Natural killer cell (primary cell): ENCODE measurements at regions of chr22 and their contacts with region 1.

Region 1: DNA sequence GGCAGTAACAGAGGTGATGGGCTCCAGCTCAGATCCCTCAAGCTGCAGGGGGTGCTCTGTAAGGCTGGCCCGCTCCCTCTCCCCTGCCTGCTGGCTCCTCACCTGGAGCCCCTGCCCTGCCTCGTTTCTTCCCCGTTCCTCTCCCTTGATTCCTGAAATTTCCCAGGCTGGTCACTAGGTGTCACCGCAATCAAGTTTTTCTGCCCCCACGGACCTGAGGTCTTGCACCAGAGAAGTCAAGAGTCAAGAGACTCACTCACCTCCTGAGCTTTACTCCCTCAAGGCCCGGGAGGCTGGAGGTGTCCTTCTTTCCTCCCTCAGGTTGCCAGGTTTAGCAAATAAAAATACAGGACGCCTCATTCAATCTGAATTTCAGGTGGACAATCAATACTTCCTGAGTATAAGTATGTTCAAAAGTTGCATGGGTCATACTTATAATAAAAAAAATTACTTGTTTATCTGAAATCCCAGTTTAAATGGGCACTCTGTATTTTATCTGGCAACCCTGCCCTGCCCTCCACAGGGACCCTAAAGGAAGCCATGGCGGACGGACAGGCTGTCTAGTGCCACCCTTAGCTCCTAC is 69.2 kb downstream of the SCUBE1 start:
- DNase-seq: peak in 1 of 2 donors; percentile 74
- ATAC-seq: peak; percentile 54 to 85 (median 73)
- H3K4me3 ChIP-seq: no peak overlapping the region
- H3K4me3 Mint-ChIP-seq: no peak overlapping the region
- H3K27ac ChIP-seq: no peak overlapping the region
- H3K27ac Mint-ChIP-seq: no peak overlapping the region
- H3K4me1 ChIP-seq: peaks cover 9% of the 10 kb centered on the region
- H3K4me1 Mint-ChIP-seq: peaks cover 6 to 19% of the 10 kb centered on the region in 2 donors
- H3K27me3 ChIP-seq: no peaks in the 10 kb centered on the region
- H3K27me3 Mint-ChIP-seq: peaks cover 0 to 15% of the 10 kb centered on the region in 2 donors
- CTCF ChIP-seq: peak; percentile 52

Region 2: DNA sequence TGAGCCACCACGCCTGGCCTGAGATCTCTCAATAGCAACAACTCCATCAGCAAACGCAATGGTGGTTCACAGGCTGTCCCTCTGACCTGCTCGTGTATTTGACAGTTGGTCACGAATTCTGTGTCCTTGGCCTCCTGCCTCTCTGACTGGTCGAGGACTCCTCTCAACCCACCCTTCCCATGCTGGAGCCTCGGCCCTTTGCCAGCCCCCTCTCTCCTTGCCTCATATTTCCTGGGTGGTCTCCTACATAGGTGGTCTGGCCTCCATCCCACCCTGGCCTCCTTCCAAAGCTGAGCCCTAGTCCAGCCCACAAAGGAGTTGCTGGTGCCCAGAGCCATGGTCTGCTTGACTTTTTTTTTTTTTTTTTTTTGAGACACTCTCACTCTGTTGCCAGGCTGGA is 541.9 kb before region 1 on chr22:
- intact Hi-C with region 1: no loop called
- DNase-seq: no peak
- ATAC-seq: no peak
- H3K4me3 ChIP-seq: no peak overlapping the region
- H3K4me3 Mint-ChIP-seq: no peak overlapping the region
- H3K27ac ChIP-seq: no peak overlapping the region
- H3K27ac Mint-ChIP-seq: no peak overlapping the region
- H3K4me1 ChIP-seq: no peaks in the 10 kb centered on the region
- H3K4me1 Mint-ChIP-seq: no peaks in the 10 kb centered on the region
- H3K27me3 ChIP-seq: no peaks in the 10 kb centered on the region
- H3K27me3 Mint-ChIP-seq: peaks cover 6 to 17% of the 10 kb centered on the region in 2 donors
- CTCF ChIP-seq: no peak

Region 3: GRCh38 chr22:43230971-43231723 is 42.8 kb before region 1 on chr22:
- intact Hi-C with region 1: loop called (anchors 1 kb)
- DNase-seq: peak; percentile 70 to 83
- ATAC-seq: peak; percentile 65 to 96 (median 90)
- H3K4me3 ChIP-seq: no peak overlapping the region
- H3K4me3 Mint-ChIP-seq: no peak overlapping the region
- H3K27ac ChIP-seq: no peak overlapping the region
- H3K27ac Mint-ChIP-seq: peak overlapping the region in 1 of 2 donors; percentile 44
- H3K4me1 ChIP-seq: peaks cover 7% of the 10 kb centered on the region
- H3K4me1 Mint-ChIP-seq: peaks cover 0 to 8% of the 10 kb centered on the region in 2 donors
- H3K27me3 ChIP-seq: no peaks in the 10 kb centered on the region
- H3K27me3 Mint-ChIP-seq: peaks cover 14 to 15% of the 10 kb centered on the region in 2 donors
- CTCF ChIP-seq: peak; percentile 99

Region 4: GRCh38 chr22:43337385-43337784 is 63.4 kb after region 1 on chr22:
- intact Hi-C with region 1: loop called (anchors 5 kb)
- DNase-seq: no peak
- ATAC-seq: no peak
- H3K4me3 ChIP-seq: no peak overlapping the region
- H3K4me3 Mint-ChIP-seq: no peak overlapping the region
- H3K27ac ChIP-seq: no peak overlapping the region
- H3K27ac Mint-ChIP-seq: no peak overlapping the region
- H3K4me1 ChIP-seq: peaks cover 3% of the 10 kb centered on the region
- H3K4me1 Mint-ChIP-seq: peaks cover 3 to 10% of the 10 kb centered on the region in 2 donors
- H3K27me3 ChIP-seq: peaks cover 8% of the 10 kb centered on the region
- H3K27me3 Mint-ChIP-seq: peaks cover 23 to 24% of the 10 kb centered on the region in 2 donors
- CTCF ChIP-seq: no peak

Region 5: GRCh38 chr22:43346521-43346929 is 72.5 kb after region 1 on chr22:
- intact Hi-C with region 1: loop called (anchors 1 kb)
- DNase-seq: peak; percentile 69 to 81
- ATAC-seq: peak; percentile 57 to 70 (median 68)
- H3K4me3 ChIP-seq: no peak overlapping the region
- H3K4me3 Mint-ChIP-seq: no peak overlapping the region
- H3K27ac ChIP-seq: no peak overlapping the region
- H3K27ac Mint-ChIP-seq: no peak overlapping the region
- H3K4me1 ChIP-seq: peaks cover 10% of the 10 kb centered on the region
- H3K4me1 Mint-ChIP-seq: peaks cover 4 to 27% of the 10 kb centered on the region in 2 donors
- H3K27me3 ChIP-seq: peaks cover 27% of the 10 kb centered on the region
- H3K27me3 Mint-ChIP-seq: peaks cover 55 to 62% of the 10 kb centered on the region in 2 donors
- CTCF ChIP-seq: peak; percentile 89